ENCODE measurements at regions of chr17 and their contacts with region 1.

Region 1: GRCh38 chr17:49496183-49496866 is 1.2 kb downstream of the NGFR start:
- DNase-seq: no peak
- ATAC-seq: peak; percentile 92
- H3K4me3 ChIP-seq: peak overlapping the region; percentile 44 to 70 (median 55); a peak in 5 of 6 replicates
- H3K27ac ChIP-seq: no peak overlapping the region
- H3K4me1 ChIP-seq: peaks cover 25% of the 10 kb centered on the region
- H3K27me3 ChIP-seq: peaks cover 22 to 83% of the 10 kb centered on the region in 2 experiments
- CTCF ChIP-seq: peak; percentile 89
- EP300 ChIP-seq: no peak
- POLR2A ChIP-seq: no peak
- RAD21 ChIP-seq: peak; percentile 89

Region 2: DNA sequence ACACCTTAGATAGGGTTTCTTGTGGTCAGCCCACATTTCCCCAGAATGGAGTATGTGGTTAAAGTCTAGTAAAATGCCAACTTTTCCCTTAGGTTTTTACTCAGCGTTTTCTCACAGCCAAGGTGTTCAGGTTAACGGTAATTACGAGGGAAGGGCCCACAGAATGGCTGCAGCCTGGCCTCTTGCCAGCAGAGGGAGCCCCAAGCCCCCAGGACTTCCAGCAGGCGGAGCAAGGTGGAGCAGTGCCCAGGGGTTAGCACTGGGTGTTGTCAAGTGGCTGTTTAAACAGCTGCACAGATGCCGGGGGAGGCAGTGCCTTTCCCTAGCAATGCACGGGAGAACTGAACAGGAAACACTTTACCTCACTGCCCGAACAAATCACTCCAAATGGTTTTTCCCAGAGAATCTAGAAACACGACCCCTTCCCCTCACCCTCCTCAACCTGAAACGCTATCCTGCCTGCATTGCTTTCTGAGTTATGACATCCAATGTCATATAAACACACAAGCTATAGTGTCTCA is 88.3 kb before region 1 on chr17:
- CTCF ChIA-PET with region 1: interaction called, 3 read pairs
- POLR2A ChIA-PET with region 1: no interaction called
- in situ Hi-C with region 1: no loop called
- intact Hi-C with region 1: loop called (anchors 10 kb)
- DNase-seq: peak; percentile 87
- ATAC-seq: peak; percentile 98
- H3K4me3 ChIP-seq: no peak overlapping the region
- H3K27ac ChIP-seq: no peak overlapping the region
- H3K4me1 ChIP-seq: peaks cover 19% of the 10 kb centered on the region
- H3K27me3 ChIP-seq: no peaks in the 10 kb centered on the region
- CTCF ChIP-seq: peak; percentile 99
- EP300 ChIP-seq: peak in 1 of 2 experiments; percentile 27; a peak in 1 of 4 replicates
- POLR2A ChIP-seq: no peak
- RAD21 ChIP-seq: peak; percentile 98

Region 3: DNA sequence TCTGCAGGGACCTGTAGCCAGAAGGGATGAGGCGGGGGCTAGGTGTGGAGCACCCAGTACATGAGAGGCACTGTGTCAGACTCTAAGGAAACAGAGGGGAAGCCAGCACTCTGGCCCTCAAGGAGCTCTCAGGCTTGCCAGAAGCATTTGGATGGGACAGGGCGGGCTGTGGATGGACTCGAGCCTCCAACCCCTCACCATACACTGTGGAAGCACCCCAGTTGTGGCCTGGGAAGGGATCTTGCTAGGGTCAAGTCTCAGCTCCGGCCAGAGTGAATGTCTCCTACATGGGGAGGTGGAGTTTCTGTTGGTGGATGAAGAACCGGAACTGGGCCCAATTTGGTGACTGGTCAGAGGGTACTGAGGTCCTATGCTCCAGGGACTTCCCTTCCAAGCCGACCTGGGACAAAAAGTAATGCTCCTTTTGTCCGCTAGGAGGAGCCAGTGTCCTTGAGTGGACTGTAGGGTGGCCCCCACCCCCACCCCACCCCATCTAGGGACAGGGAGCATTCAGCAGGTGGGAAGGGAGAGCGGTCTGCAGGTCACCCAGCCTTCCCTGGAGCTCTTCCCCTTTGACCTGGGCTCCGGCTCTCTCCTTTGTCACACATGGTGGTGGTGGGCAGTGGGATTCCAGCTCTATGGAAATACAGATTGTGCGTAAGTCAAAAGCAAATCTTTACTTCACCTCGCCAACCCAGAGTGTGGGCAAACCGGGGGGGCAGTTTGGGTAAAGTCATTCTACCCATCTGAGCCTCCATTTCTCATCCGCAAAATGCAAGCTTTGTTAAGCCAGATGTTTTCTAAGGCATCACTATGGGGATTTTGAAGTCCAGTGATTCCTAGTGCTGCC is 61.3 kb before region 1 on chr17:
- CTCF ChIA-PET with region 1: interaction called, 5 read pairs
- POLR2A ChIA-PET with region 1: no interaction called
- in situ Hi-C with region 1: loop called (anchors 5 kb)
- intact Hi-C with region 1: loop called (anchors 1 kb)
- DNase-seq: peak; percentile 74
- ATAC-seq: peak; percentile 80
- H3K4me3 ChIP-seq: no peak overlapping the region
- H3K27ac ChIP-seq: no peak overlapping the region
- H3K4me1 ChIP-seq: peaks cover 44% of the 10 kb centered on the region
- H3K27me3 ChIP-seq: peaks cover 4 to 57% of the 10 kb centered on the region in 2 experiments
- CTCF ChIP-seq: peak; percentile 83
- EP300 ChIP-seq: no peak
- POLR2A ChIP-seq: no peak
- RAD21 ChIP-seq: peak; percentile 63; the same call in 1 of the 2 replicates

Region 4: GRCh38 chr17:49469831-49470810 is 26.2 kb before region 1 on chr17:
- CTCF ChIA-PET with region 1: no interaction called
- POLR2A ChIA-PET with region 1: no interaction called
- in situ Hi-C with region 1: no loop called
- intact Hi-C with region 1: no loop called
- DNase-seq: no peak
- ATAC-seq: no peak
- H3K4me3 ChIP-seq: no peak overlapping the region
- H3K27ac ChIP-seq: no peak overlapping the region
- H3K4me1 ChIP-seq: peaks cover 33% of the 10 kb centered on the region
- H3K27me3 ChIP-seq: peaks cover 12 to 73% of the 10 kb centered on the region in 2 experiments
- CTCF ChIP-seq: no peak
- EP300 ChIP-seq: no peak
- POLR2A ChIP-seq: no peak
- RAD21 ChIP-seq: no peak

Region 5: DNA sequence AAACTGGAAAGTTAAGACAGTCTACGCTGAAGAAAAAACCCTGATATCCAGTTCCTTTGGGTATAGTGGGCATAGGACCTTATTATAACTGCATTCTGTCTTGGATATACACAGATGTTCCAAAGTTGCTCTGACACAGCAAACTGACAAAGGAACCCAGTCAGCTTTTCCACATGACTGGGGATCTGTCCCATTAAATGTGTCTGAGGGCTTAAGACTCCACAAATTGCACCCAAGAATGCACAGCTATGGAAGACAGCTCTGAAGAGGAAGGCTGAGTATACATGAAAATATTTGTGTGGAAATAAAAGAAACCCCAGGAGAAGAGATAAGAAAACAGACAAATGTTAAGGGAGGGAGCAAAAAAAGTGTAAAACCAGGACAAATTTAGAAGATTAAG is 1510.3 kb after region 1 on chr17:
- CTCF ChIA-PET with region 1: no interaction called
- POLR2A ChIA-PET with region 1: no interaction called
- in situ Hi-C with region 1: no loop called
- intact Hi-C with region 1: loop called (anchors 5 kb)
- DNase-seq: no peak
- ATAC-seq: no peak
- H3K4me3 ChIP-seq: no peak overlapping the region
- H3K27ac ChIP-seq: no peak overlapping the region
- H3K4me1 ChIP-seq: peaks cover 17% of the 10 kb centered on the region
- H3K27me3 ChIP-seq: no peaks in the 10 kb centered on the region
- CTCF ChIP-seq: no peak
- EP300 ChIP-seq: no peak
- POLR2A ChIP-seq: no peak
- RAD21 ChIP-seq: no peak